Activated CD4-positive, alpha-beta T cell treated with anti-CD3 and anti-CD28 coated beads for 36 hours (primary cell): ENCODE measurements at regions of chr1 and their contacts with region 1.

Region 1: GRCh38 chr1:93453911-93454310 is 6.0 kb downstream of the FNBP1L start:
- DNase-seq: no peak
- ATAC-seq: no peak
- H3K4me3 Mint-ChIP-seq: no peak overlapping the region
- H3K27ac Mint-ChIP-seq: no peak overlapping the region
- H3K4me1 Mint-ChIP-seq: peaks cover 7% of the 10 kb centered on the region
- H3K27me3 Mint-ChIP-seq: peaks cover 22% of the 10 kb centered on the region

Region 2: DNA sequence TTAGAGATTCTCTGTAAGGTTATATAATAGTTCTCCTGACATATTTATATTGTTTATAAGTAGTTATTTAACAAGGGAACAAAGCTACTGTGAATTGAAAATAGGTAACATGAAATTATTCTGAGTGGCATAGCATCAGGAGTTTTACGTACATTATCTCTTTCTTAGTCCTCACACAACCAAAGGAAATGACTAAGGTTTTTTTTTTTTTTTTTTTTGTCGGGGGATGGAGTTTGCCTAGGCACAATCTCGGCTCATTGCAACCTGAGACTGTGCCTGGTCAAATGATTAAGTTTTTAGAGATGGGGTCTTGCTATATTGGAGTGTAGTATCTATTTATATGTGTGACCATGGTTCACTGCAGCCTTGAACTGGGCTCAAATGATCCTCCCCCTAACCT is 298.6 kb before region 1 on chr1:
- CTCF ChIA-PET with region 1: no interaction called
- POLR2A ChIA-PET with region 1: no interaction called
- intact Hi-C with region 1: no loop called
- DNase-seq: no peak
- ATAC-seq: peak; percentile 78
- H3K4me3 Mint-ChIP-seq: no peak overlapping the region
- H3K27ac Mint-ChIP-seq: peak overlapping the region; percentile 47
- H3K4me1 Mint-ChIP-seq: peaks cover 25% of the 10 kb centered on the region
- H3K27me3 Mint-ChIP-seq: no peaks in the 10 kb centered on the region

Region 3: GRCh38 chr1:93468662-93469061 is 14.8 kb after region 1 on chr1:
- CTCF ChIA-PET with region 1: no interaction called
- POLR2A ChIA-PET with region 1: no interaction called
- intact Hi-C with region 1: loop called in 1 of 2 experiments (anchors 2 kb)
- DNase-seq: no peak
- ATAC-seq: no peak
- H3K4me3 Mint-ChIP-seq: no peak overlapping the region
- H3K27ac Mint-ChIP-seq: no peak overlapping the region
- H3K4me1 Mint-ChIP-seq: no peaks in the 10 kb centered on the region
- H3K27me3 Mint-ChIP-seq: no peaks in the 10 kb centered on the region

Region 4: DNA sequence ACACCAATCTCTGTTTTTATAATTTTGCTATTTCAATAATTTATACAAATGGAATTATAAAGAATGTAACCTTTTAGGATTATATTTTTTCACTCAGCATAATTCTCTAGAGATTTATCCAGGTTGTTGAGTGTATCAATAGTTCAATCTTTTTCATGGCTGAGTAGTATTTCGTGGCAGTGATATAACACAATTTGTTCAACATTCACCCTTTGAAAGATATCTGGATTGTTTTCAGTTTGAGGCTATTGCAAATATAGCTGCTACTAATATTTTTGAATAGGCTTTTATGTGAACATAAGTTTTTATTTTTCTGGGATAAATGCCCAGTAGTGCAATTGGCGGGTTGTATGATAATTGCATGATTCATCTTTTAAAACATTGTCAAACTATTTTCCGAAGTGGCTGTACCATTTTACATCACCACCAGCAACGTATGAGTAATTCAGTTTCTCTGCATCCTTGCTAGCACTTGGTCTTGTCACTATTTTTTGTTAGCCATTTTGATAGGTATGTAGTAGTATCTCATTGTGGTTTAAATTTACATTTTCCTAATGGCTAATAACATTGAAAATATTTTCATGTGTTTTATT is 908.7 kb after region 1 on chr1:
- CTCF ChIA-PET with region 1: no interaction called
- POLR2A ChIA-PET with region 1: no interaction called
- intact Hi-C with region 1: no loop called
- DNase-seq: no peak
- ATAC-seq: no peak
- H3K4me3 Mint-ChIP-seq: no peak overlapping the region
- H3K27ac Mint-ChIP-seq: no peak overlapping the region
- H3K4me1 Mint-ChIP-seq: peaks cover 11% of the 10 kb centered on the region
- H3K27me3 Mint-ChIP-seq: peaks cover 5% of the 10 kb centered on the region